ENCODE measurements at regions of chr2 and their contacts with region 1.

Region 1: GRCh38 chr2:188524519-188525113 is 232.9 kb downstream of the GULP1 start:
- DNase-seq: peak; percentile 28
- H3K4me3 ChIP-seq: no peak overlapping the region
- H3K27ac ChIP-seq: no peak overlapping the region
- H3K4me1 ChIP-seq: no peaks in the 10 kb centered on the region
- H3K27me3 ChIP-seq: no peaks in the 10 kb centered on the region
- CTCF ChIP-seq: peak; percentile 61 to 63

Region 2: GRCh38 chr2:187499941-187500532 is 1024.6 kb before region 1 on chr2:
- CTCF ChIA-PET with region 1: no interaction called
- dilution Hi-C with region 1: no loop called
- in situ Hi-C with region 1: loop called in 1 of 2 experiments (anchors 25 kb)
- intact Hi-C with region 1: no loop called
- DNase-seq: peak; percentile 28
- H3K4me3 ChIP-seq: no peak overlapping the region
- H3K27ac ChIP-seq: no peak overlapping the region
- H3K4me1 ChIP-seq: no peaks in the 10 kb centered on the region
- H3K27me3 ChIP-seq: no peaks in the 10 kb centered on the region
- CTCF ChIP-seq: peak; percentile 74 to 82

Region 3: DNA sequence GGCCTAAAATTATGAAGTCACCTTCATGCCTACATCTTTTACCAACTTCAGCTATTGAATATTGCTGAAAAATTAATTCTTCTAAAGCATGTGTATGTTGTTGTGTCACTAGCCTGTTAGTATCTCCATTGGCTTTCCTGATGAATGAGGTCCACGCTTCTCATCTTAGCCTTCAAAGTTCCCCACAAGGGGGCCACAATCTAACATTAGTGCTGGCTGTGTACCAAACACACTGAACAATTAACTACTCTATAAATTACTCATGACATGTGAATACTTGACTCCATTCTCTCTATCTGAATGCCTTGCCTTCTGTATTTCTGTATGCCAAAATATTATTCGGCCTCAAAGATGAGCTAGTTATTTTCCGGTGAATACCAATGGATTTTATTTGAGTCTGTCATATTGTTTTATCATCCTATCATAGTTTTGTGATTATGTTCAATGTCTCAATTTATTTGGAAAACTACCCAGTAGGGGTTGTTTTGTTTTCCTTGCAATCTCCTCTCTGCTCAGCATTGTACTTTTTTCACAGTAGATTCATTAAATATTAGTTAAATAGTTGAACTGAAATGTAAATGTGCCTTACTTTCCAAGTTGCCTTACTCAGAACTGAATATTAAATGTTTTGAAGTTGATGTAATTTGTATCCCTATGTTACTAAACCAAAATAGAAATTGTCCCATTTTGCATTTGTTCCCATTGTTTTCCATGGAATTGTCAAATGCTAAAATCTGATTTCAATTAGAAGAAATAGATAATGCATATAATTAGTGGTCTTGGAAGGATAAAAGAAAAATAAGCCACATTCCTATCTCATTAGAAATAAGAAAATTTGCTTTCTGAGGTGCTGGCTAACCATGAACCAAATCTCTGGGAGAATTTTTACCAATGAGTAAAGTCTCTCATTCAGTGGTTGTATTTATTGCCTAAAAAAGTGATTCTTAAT is 241.2 kb after region 1 on chr2:
- CTCF ChIA-PET with region 1: no interaction called
- dilution Hi-C with region 1: no loop called
- in situ Hi-C with region 1: no loop called
- intact Hi-C with region 1: loop called (anchors 5 kb)
- DNase-seq: peak; percentile 63
- H3K4me3 ChIP-seq: no peak overlapping the region
- H3K27ac ChIP-seq: no peak overlapping the region
- H3K4me1 ChIP-seq: no peaks in the 10 kb centered on the region
- H3K27me3 ChIP-seq: peaks cover 2% of the 10 kb centered on the region
- CTCF ChIP-seq: peak; percentile 42 to 48

Region 4: GRCh38 chr2:189024901-189025618 is 500.4 kb after region 1 on chr2:
- CTCF ChIA-PET with region 1: no interaction called
- dilution Hi-C with region 1: no loop called
- in situ Hi-C with region 1: loop called in 1 of 2 experiments (anchors 25 kb)
- intact Hi-C with region 1: no loop called
- DNase-seq: peak; percentile 3
- H3K4me3 ChIP-seq: no peak overlapping the region
- H3K27ac ChIP-seq: no peak overlapping the region
- H3K4me1 ChIP-seq: no peaks in the 10 kb centered on the region
- H3K27me3 ChIP-seq: no peaks in the 10 kb centered on the region
- CTCF ChIP-seq: peak; percentile 45 to 49

Region 5: DNA sequence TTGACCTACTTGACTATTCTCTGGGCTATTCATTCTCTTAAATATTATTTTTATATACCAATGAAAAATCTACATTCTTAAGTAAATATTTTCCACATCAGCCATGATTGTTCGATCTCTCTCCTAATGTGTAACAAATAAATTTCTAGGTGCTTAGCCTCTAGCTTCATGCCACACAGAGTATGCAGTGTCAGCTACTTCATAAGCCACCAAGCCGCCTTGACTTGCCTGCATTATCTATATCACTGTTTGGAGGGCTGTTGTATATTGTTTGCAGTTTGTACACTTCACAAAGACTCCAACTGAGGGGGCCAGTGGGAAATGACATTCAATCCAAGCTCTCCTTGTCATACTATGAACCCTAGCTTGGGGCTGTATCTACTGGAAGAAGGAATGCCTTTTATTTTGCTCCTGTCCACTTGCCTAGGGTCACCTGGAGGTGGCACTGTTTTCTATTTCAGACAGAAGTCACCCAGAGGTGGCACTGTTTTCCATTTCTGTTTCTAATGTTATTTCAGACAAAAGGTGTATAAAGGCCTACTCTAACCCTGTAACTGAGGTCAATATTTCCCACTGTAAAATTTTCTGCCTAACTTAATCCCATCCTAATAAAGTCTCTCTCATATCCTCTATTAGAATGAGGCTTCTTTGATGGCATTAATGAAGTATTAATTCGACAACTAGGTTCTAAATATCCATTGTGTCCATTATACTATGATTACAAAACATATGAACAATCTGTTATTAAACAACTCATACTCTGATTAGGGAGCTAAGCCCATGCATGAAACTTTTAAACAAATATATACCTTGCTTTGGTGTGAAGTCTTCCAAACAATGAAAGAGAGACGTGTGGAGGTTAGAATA is 618.5 kb after region 1 on chr2:
- CTCF ChIA-PET with region 1: no interaction called
- dilution Hi-C with region 1: no loop called
- in situ Hi-C with region 1: no loop called
- intact Hi-C with region 1: loop called (anchors 1 kb)
- DNase-seq: peak; percentile 52
- H3K4me3 ChIP-seq: no peak overlapping the region
- H3K27ac ChIP-seq: no peak overlapping the region
- H3K4me1 ChIP-seq: no peaks in the 10 kb centered on the region
- H3K27me3 ChIP-seq: no peaks in the 10 kb centered on the region
- CTCF ChIP-seq: peak; percentile 96 to 98

Region 6: GRCh38 chr2:189347540-189347939 is 822.9 kb after region 1 on chr2:
- CTCF ChIA-PET with region 1: no interaction called
- dilution Hi-C with region 1: no loop called
- in situ Hi-C with region 1: no loop called
- intact Hi-C with region 1: loop called (anchors 1 kb)
- DNase-seq: peak; percentile 80
- H3K4me3 ChIP-seq: no peak overlapping the region
- H3K27ac ChIP-seq: peak overlapping the region; percentile 67
- H3K4me1 ChIP-seq: peaks cover 11% of the 10 kb centered on the region
- H3K27me3 ChIP-seq: no peaks in the 10 kb centered on the region
- CTCF ChIP-seq: peak in 1 of 2 donors; percentile 47

Measured in mammary epithelial cell (primary cell).